ENCODE measurements at regions of chr7 and their contacts with region 1.

Region 1: DNA sequence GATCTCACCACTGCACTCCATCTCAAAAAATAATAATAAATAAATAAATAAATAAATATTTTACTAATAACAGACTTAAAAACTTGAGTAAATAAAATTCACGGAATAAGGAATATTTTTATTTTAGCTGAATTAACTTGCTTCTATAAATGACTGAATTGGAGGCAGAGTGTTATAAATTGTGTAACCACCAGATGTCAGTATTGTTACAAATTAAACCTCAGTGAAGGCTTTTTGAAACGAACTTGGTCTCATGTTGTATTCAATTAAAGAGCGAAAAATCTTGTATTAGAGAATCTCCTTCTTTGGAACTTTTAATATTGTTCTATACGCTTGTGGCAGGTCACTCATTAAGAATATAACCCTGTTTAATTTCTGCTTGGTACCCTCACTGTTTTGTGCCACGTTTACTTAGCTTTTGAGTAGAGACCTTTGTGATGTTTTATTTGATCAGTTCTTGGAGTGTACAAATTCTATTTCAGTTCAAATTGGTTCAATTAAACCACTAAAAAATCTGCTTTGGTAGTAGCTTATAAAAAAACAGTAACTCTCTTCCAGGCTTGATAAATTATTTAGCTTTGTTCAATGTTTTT is 45.6 kb upstream of the SCIN start:
- DNase-seq: no peak
- ATAC-seq: peak; percentile 36

Region 2: GRCh38 chr7:12623897-12624498 is 99.1 kb after region 1 on chr7:
- intact Hi-C with region 1: loop called (anchors 5 kb)
- DNase-seq: no peak
- ATAC-seq: no peak

Region 3: DNA sequence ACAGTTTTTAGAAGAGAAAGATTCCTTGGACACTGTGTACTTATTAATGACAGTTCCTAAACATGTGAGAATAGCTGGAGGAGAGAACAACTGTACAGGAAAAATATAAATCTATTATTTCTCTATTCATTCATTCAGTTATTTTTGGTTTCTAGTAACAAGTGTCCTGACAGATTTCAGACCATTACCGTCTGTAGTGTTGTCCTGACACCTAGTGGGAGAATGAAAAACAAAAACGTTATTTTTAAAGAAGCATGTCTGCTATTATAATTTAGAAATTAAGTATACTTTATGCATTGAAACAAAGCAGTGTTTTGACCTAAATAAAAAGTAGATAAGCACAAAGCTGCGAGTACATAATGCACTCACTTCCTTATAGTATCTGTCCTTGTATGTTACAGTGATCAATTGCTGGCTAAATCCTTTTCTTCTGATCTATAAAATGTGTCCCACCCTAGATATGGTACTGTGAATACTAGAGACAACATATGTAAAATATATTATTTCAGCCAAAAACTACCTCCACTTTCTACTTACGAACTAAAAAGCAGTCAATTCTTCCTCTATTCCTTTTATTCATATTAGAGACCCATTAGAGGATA is 738.1 kb after region 1 on chr7:
- intact Hi-C with region 1: loop called (anchors 2 kb)
- DNase-seq: no peak
- ATAC-seq: peak; percentile 68